Activated T-helper 2 cell treated with anti-CD3 and anti-CD28 coated beads, Interferon-gamma antibody, Interleukin-2, Interleukin-4, amounts not matched to agents 10 μg/mL and 5 μg/mL and 100 μg/mL, durations not matched to agents 14 hours and 24 hours and 36 hours (primary cell): ENCODE measurements at regions of chr14 and their contacts with region 1.

Region 1: DNA sequence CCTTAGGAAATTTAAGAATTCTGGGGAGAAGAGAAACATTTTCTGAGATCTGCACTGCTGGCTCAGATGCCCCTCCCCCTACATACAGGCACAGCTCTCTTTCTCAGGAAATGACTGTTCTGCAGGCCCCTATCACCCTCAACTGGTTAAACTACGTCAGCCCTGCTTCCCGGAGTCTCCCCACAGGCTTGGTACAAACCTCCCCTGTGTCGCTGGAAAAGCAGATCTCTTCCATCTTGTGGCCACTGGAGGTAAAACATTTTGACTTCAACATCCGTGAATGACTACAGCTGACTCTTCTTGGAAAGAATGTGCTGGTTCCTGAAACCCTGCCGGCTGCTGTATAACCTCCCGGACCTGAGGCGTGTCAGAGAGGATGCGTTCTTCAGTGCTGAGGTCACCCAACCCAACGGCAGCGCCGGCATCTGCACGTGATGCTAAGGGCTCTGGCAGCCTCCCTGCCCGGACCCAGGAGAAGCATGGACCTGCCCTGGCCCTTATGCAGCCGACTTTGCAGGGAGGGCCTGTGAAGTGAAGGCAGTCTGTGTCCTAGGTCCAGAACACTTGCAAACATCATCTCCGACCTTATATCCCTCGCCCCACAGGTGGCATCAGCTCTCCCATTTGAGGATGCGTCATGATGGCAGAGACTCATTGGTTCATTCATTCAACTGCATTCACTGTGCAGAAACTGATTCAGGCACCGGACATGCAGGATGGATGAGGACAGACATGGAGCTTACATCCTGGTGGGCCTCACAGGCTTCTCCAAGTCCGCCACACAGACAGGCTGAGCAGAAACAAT is 129.3 kb downstream of the GCH1 start:
- DNase-seq: peak; percentile 77
- H3K4me3 Mint-ChIP-seq: peak overlapping the region; percentile 35
- H3K27ac Mint-ChIP-seq: peak overlapping the region; percentile 76
- H3K4me1 Mint-ChIP-seq: peaks cover 51% of the 10 kb centered on the region
- H3K27me3 Mint-ChIP-seq: peaks cover 32% of the 10 kb centered on the region

Region 2: GRCh38 chr14:54440873-54441868 is 332.2 kb before region 1 on chr14 and contains the start of gene CNIH1:
- intact Hi-C with region 1: loop called (anchors 1 kb)
- DNase-seq: peak; percentile 90
- H3K4me3 Mint-ChIP-seq: peak within 1 kb of the TSS; percentile 95
- H3K27ac Mint-ChIP-seq: peak within 1 kb of the TSS; percentile 97
- H3K4me1 Mint-ChIP-seq: peaks cover 47% of the 10 kb centered on the region
- H3K27me3 Mint-ChIP-seq: peaks cover 5% of the 10 kb centered on the region
- total RNA-seq, gene CNIH1: 113 and 115 TPM in 2 replicates

Region 3: GRCh38 chr14:54627540-54628363 is 145.6 kb before region 1 on chr14:
- intact Hi-C with region 1: loop called (anchors 5 kb)
- DNase-seq: peak; percentile 27
- H3K4me3 Mint-ChIP-seq: peak overlapping the region; percentile 52
- H3K27ac Mint-ChIP-seq: peak overlapping the region; percentile 76
- H3K4me1 Mint-ChIP-seq: peaks cover 44% of the 10 kb centered on the region
- H3K27me3 Mint-ChIP-seq: no peaks in the 10 kb centered on the region

Region 4: GRCh38 chr14:54691525-54692283 is 81.7 kb before region 1 on chr14:
- intact Hi-C with region 1: loop called (anchors 2 kb)
- DNase-seq: peak; percentile 24
- H3K4me3 Mint-ChIP-seq: no peak overlapping the region
- H3K27ac Mint-ChIP-seq: no peak overlapping the region
- H3K4me1 Mint-ChIP-seq: peaks cover 14% of the 10 kb centered on the region
- H3K27me3 Mint-ChIP-seq: peaks cover 30% of the 10 kb centered on the region

Region 5: DNA sequence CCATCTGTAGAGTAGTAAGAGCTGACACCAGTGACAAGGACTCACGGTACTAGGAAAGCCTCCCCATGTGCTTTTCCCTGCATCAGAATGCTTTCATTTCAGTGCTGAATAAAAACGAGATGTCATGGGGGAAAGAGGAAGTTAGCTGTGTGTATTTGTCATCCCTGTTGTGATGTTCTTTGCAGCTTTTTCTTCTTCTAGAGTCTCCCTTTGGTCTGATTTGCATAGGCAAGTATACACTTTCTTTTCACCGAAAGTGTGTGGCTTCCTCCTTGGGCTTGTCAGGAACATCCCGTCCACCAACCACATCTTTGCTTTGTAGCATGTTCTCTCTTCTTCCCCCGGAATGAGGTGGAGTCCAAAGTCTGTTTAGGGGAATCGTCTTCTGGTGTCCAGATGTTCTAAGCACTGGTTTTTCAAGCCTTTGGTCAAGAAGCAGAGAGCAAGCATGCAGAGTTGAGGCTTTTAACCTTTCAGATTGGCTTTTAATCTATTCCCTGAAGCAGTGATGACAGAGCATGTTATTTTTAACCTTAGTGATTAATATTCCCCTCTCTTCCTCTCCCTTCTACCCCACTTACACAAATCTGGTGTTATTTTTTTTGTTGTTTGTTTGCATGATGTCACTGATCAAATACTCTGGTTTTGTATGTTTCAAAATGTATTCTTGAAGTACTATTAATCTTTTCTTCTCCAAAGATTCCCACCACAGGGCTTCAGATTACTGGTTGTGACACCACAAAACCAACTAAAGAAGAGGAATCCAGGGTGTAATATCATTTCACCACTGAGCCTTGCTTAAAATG is 43.0 kb before region 1 on chr14:
- intact Hi-C with region 1: loop called (anchors 1 kb)
- DNase-seq: peak; percentile 37
- H3K4me3 Mint-ChIP-seq: peak overlapping the region; percentile 24
- H3K27ac Mint-ChIP-seq: peak overlapping the region; percentile 93
- H3K4me1 Mint-ChIP-seq: peaks cover 44% of the 10 kb centered on the region
- H3K27me3 Mint-ChIP-seq: peaks cover 20% of the 10 kb centered on the region

Region 6: DNA sequence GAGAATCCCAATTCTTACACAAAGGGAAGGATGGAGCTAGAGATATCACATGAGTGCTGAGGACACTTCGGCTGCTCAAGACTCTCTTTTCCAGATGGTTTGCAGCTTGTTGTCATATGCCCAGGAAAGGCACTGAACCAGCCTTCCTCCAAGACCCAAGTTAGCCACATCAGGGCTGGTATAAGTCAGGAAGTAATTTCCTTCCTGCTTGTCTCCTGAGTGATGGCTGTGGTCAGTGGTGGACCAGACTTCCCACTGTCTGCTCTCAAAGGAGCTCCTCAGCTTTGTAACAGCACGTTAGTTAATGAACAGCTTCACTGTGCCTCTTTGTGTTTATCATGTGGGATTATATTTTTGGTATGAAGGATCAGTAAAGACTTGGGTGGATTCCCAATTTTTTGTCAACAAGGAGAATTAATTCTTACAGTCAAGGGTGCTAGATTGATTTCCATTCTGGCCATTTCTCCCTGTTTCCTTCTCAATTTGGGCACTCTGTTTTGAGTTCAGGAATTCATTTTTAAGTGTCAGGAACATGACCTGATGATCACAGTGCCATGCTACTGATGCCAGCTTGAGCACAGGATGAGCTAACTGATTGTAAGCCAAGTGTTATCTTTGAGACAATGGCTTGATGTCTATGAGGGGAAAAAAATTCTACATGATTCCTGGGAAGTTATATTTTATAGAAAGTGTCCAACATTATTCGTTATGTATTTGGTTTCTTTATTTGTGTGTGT is 16.5 kb before region 1 on chr14:
- intact Hi-C with region 1: loop called (anchors 1 kb)
- DNase-seq: no peak
- H3K4me3 Mint-ChIP-seq: no peak overlapping the region
- H3K27ac Mint-ChIP-seq: no peak overlapping the region
- H3K4me1 Mint-ChIP-seq: peaks cover 30% of the 10 kb centered on the region
- H3K27me3 Mint-ChIP-seq: peaks cover 11% of the 10 kb centered on the region

Region 7: DNA sequence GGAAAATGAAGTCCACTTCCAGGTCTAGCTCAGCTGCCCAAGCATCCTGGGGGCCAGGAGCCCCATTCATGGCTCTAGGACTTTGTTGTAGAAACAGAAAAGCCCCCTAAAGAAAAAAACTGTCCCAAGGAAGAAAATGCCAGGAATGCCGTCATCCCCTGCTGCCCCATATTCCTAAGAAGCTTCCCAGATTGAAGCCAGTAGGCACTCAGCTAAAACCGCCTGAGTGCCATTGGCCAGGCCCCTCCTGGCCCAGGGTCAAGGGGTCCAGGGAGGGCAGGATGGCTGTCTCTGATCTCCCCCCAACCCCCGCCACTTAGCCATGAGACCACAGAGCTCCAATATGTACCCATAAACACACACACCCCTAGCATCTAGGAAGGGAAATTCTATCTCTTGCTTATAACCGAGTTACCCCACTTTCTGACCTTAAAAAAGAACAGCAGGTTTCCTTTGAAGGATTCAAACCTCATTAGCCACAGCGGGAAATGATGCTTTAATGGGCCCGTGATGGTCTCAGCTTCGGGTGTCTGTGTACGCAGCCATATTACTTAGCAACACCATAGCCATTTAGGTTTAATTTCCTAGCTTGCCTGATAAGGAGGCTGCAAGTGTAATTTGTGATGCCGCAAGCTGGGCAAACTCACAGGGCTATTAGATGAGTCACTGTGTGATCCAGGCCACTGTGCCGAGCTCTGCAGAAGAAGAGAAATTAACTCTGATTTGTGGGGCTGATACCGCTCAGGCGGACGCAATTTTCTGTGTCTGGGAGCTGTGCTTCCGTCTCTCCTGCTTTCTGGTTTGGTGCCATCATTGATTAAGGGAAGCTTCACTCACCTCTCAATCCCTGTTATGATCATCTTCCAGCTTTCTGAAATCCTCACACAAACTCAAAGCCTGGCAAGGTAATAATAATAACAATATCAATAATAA is 45.1 kb after region 1 on chr14:
- intact Hi-C with region 1: no loop called
- DNase-seq: no peak
- H3K4me3 Mint-ChIP-seq: no peak overlapping the region
- H3K27ac Mint-ChIP-seq: no peak overlapping the region
- H3K4me1 Mint-ChIP-seq: no peaks in the 10 kb centered on the region
- H3K27me3 Mint-ChIP-seq: peaks cover 9% of the 10 kb centered on the region